AG04450 (cell line): ENCODE measurements at regions of chr6 and their contacts with region 1.

Region 1: GRCh38 chr6:159726918-159727716 is at the start of gene WTAP:
- DNase-seq: peak; percentile 83
- H3K4me3 ChIP-seq: peak within 1 kb of the TSS; percentile 86
- H3K27ac ChIP-seq: peak within 1 kb of the TSS; percentile 98
- H3K27me3 ChIP-seq: no peaks in the 10 kb centered on the region
- CTCF ChIP-seq: no peak
- polyA plus RNA-seq, gene WTAP: 38.5 and 45.7 TPM in 2 replicates

Region 2: DNA sequence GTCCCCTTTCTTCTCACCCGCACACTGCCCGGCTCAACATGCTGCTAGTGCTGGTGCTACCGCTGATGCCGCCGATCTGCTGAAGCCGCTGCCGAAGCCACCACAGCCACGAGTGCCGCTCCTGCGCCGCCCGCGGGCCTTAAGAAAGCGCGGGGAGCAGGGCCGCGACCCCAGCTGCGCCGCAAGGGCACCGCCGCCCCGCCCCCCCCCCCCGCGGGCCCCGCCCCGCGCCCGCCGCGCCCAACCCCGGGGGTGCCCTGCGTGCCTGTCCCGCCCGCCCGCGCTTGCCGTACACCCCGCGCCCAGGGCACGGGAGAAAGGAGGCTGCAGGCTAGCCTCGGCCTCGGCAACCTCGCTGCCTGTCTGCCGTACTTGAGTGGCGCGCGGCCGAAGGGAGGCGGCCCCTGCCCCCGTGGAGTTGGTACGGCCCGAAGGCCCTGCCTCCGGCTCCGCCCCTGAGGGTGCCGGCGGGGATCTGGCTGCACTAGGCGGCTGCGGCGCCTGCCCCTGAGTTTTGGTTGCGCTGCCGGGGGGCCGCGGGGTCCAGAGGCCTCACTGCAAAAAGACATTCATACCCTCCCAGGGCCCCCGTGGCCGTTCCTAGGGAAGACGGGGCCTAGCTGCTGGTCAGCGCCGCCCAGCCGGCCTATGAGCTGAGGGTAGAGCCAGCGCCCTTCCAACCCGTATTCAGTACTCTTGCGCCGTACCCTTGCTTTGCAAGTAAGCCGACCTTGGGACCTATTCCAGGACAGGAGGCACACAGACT is 33.8 kb before region 1 on chr6 and contains the start of gene SOD2:
- CTCF ChIA-PET with region 1: interaction called, 9 read pairs
- POLR2A ChIA-PET with region 1: interaction called, 15 read pairs
- DNase-seq: peak; percentile 58
- H3K4me3 ChIP-seq: peak within 1 kb of the TSS; percentile 94
- H3K27ac ChIP-seq: peak within 1 kb of the TSS; percentile 78
- H3K27me3 ChIP-seq: no peaks in the 10 kb centered on the region
- CTCF ChIP-seq: no peak
- polyA plus RNA-seq, gene SOD2: 126 and 194 TPM in 2 replicates

Region 3: GRCh38 chr6:159716247-159717096 is 10.6 kb before region 1 on chr6:
- CTCF ChIA-PET with region 1: interaction called, 7 read pairs
- POLR2A ChIA-PET with region 1: interaction called, 11 read pairs
- DNase-seq: peak; percentile 89
- H3K4me3 ChIP-seq: no peak overlapping the region
- H3K27ac ChIP-seq: peak overlapping the region; percentile 94
- H3K27me3 ChIP-seq: no peaks in the 10 kb centered on the region
- CTCF ChIP-seq: no peak

Region 4: GRCh38 chr6:159761873-159762680 is 35.0 kb after region 1 on chr6 and contains the start of gene ACAT2:
- CTCF ChIA-PET with region 1: no interaction called
- POLR2A ChIA-PET with region 1: interaction called, 10 read pairs
- DNase-seq: peak; percentile 84
- H3K4me3 ChIP-seq: peak within 1 kb of the TSS; percentile 86
- H3K27ac ChIP-seq: peak within 1 kb of the TSS; percentile 97
- H3K27me3 ChIP-seq: no peaks in the 10 kb centered on the region
- CTCF ChIP-seq: no peak
- polyA plus RNA-seq, gene ACAT2: 36.9 and 39.9 TPM in 2 replicates

Region 5: GRCh38 chr6:159789377-159790148 is 62.4 kb after region 1 on chr6 and contains the start of gene TCP1:
- CTCF ChIA-PET with region 1: interaction called, 3 read pairs
- POLR2A ChIA-PET with region 1: interaction called, 18 read pairs
- DNase-seq: peak; percentile 98
- H3K4me3 ChIP-seq: peak within 1 kb of the TSS; percentile 98
- H3K27ac ChIP-seq: peak within 1 kb of the TSS; percentile 83
- H3K27me3 ChIP-seq: no peaks in the 10 kb centered on the region
- CTCF ChIP-seq: no peak
- polyA plus RNA-seq, gene TCP1: 132 and 182 TPM in 2 replicates